ENCODE measurements at regions of chr5 and their contacts with region 1.

Region 1: GRCh38 chr5:138223532-138223931 is 10.4 kb upstream of the CDC23 start:
- DNase-seq: no peak
- H3K4me3 ChIP-seq: no peak overlapping the region
- H3K27ac ChIP-seq: no peak overlapping the region
- H3K4me1 ChIP-seq: peaks cover 0 to 6% (median 2%) of the 10 kb centered on the region in 4 experiments
- H3K27me3 ChIP-seq: no peaks in the 10 kb centered on the region

Region 2: DNA sequence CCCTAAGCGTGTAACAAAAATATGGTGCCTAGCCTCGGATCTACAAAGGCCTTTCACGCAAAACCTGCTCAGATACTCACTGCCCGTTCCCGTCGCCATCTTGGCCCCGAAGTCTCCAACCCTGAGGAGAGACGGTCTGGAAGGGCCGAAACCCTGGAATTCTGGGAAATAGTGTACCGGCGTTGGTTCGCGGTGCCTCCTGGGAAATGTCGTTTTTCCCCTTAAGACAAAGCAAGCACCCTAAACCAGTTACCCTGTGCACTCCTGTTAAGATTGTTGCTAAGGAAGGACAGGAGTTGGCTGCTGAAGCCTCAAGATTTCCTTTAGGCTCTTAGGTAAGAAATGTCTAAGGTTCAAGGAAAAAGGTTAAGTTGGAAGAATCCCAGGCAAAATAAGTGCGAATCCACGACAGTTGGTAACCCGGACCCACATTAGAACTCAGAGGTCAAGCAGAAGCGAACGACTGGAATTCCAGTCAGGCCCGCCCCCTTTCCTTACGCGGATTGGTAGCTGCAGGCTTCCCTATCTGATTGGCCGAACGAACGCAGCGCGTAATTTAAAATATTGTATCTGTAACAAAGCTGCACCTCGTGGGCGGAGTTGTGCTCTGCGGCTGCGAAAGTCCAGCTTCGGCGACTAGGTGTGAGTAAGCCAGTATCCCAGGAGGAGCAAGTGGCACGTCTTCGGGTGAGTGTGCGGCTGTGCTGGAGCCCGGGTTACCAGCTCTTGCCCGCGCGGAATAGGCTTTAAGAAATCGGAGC is 44.8 kb before region 1 on chr5 and contains the starts of genes BRD8 and KIF20A:
- CTCF ChIA-PET with region 1: interaction called, 12 read pairs
- POLR2A ChIA-PET with region 1: no interaction called
- DNase-seq: peak; percentile 94 to 96 (median 95)
- H3K4me3 ChIP-seq: peak within 1 kb of the TSS; percentile 69 to 100 (median 98)
- H3K27ac ChIP-seq: peak within 1 kb of the TSS; percentile 88 to 91
- H3K4me1 ChIP-seq: peaks cover 13 to 25% (median 21%) of the 10 kb centered on the region in 4 experiments
- H3K27me3 ChIP-seq: no peaks in the 10 kb centered on the region

Region 3: DNA sequence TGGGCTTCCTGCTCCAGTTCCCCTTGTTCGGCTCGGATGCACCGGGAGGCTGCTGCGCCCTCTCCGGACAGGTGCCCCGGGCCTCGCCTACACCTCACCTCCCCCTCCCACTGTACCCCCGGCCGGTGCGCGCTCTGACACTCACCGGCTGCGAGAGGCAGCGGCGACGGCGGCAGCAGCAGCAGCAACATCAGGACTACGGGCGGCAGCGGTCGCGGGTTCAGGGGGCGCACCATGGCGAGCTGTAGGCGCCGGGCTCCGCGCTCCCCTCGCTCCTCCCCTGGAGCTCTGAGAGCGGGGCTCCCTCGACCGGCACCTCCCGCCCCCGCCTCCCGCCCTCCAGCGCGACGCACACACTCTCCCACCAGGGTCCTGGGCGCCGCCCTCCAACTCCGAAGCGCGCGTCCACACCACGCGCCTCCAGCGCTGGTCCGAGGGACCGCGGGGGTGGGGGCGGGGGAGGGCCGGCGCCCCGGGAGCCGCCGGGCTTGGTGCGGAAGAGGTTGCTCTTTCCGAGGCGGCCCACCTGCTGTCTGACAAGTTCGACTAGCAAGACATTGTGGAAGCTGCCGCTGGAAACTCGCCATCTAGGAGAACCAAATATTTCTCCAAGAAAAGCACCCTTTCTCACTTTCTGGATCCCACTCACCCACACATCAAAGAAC is 50.8 kb after region 1 on chr5 and contains the start of gene GFRA3:
- CTCF ChIA-PET with region 1: interaction called, 40 read pairs
- POLR2A ChIA-PET with region 1: no interaction called
- DNase-seq: peak in 2 of 3 donors; percentile 31 to 49
- H3K4me3 ChIP-seq: peak within 1 kb of the TSS; percentile 3 to 72 (median 51)
- H3K27ac ChIP-seq: no peak within 1 kb of the TSS
- H3K4me1 ChIP-seq: peaks cover 0 to 29% (median 22%) of the 10 kb centered on the region in 4 experiments
- H3K27me3 ChIP-seq: peaks cover 0 to 22% (median 11%) of the 10 kb centered on the region in 5 experiments

Measured in common myeloid progenitor, CD34-positive (primary cell).